ENCODE measurements at regions of chr10 and their contacts with region 1.

Region 1: GRCh38 chr10:129466703-129467358 is at the start of gene MGMT:
- DNase-seq: peak; percentile 94
- H3K4me3 ChIP-seq: peak within 1 kb of the TSS; percentile 80
- H3K27ac ChIP-seq: peak within 1 kb of the TSS; percentile 81
- H3K4me1 ChIP-seq: peaks cover 11% of the 10 kb centered on the region
- H3K27me3 ChIP-seq: no peaks in the 10 kb centered on the region
- CTCF ChIP-seq: no peak
- total RNA-seq, gene MGMT: 19.5 and 28.0 TPM in 2 replicates

Region 2: DNA sequence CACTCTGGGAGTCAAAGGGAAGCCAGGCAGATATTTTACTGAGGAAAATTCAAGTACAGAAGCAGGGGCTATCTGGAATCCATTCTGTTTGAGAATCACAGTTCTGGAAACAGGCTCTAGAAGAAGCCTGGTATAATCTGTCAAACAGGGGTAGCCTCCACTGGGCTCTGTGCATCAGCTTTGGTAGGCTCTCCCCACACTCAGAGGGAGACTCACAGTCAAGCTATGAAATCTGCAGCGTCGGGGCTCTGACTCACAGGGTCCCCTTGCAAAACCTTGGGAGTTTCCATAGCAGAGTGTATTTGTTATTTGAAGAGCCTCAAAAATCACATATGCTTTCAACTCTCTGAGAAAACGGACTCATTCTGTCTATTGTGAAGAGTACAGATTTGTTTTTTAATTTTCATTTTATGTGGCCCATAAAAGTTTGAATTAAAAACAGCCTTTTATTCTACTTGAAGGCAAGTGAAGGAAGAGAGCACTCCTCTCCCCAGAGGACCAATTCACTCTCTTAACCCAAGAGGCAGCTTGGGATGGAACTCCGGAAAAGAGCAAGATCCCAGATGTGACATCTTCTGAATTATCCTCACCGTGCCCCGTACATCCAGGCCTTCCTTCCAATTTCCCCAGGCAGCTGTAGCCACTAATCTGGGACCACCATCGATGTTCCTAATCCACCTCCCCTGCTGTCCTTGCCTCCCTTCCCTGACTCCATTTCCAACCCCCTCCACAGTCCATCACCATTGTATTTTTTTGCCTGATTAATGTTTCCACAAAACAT is 590.7 kb before region 1 on chr10:
- CTCF ChIA-PET with region 1: no interaction called
- POLR2A ChIA-PET with region 1: no interaction called
- intact Hi-C with region 1: no loop called
- DNase-seq: peak; percentile 11
- H3K4me3 ChIP-seq: no peak overlapping the region
- H3K27ac ChIP-seq: no peak overlapping the region
- H3K4me1 ChIP-seq: peaks cover 11% of the 10 kb centered on the region
- H3K27me3 ChIP-seq: no peaks in the 10 kb centered on the region
- CTCF ChIP-seq: no peak

Region 3: DNA sequence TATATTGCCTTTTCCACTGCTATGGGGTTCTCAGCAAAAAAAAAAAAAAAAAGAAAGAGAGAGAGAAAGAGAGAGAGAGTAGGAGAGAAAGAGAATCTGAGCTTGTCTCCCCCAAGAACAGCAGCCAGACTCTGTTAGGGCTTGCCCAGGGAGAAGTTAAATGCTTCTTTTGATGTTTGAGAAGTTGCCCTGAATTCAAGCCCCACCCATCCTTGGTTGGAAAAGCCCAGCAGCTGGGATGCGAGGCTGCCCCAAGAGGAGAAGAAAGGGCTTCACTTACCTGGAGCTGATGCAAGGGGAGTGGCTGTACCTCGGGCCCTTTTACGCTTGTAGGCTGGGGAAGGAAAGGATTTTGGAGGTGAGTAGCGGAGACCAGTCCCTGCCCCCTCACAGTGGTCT is 20.6 kb before region 1 on chr10:
- CTCF ChIA-PET with region 1: no interaction called
- POLR2A ChIA-PET with region 1: no interaction called
- intact Hi-C with region 1: no loop called
- DNase-seq: no peak
- H3K4me3 ChIP-seq: no peak overlapping the region
- H3K27ac ChIP-seq: no peak overlapping the region
- H3K4me1 ChIP-seq: no peaks in the 10 kb centered on the region
- H3K27me3 ChIP-seq: no peaks in the 10 kb centered on the region
- CTCF ChIP-seq: no peak

Region 4: GRCh38 chr10:129551767-129552518 is 85.1 kb after region 1 on chr10:
- CTCF ChIA-PET with region 1: interaction called, 10 read pairs
- POLR2A ChIA-PET with region 1: no interaction called
- intact Hi-C with region 1: no loop called
- DNase-seq: no peak
- H3K4me3 ChIP-seq: no peak overlapping the region
- H3K27ac ChIP-seq: no peak overlapping the region
- H3K4me1 ChIP-seq: no peaks in the 10 kb centered on the region
- H3K27me3 ChIP-seq: no peaks in the 10 kb centered on the region
- CTCF ChIP-seq: no peak